Right ventricle myocardium superior (tissue), 1 donor: ENCODE measurements at regions of chr11 and their contacts with region 1.

Region 1: DNA sequence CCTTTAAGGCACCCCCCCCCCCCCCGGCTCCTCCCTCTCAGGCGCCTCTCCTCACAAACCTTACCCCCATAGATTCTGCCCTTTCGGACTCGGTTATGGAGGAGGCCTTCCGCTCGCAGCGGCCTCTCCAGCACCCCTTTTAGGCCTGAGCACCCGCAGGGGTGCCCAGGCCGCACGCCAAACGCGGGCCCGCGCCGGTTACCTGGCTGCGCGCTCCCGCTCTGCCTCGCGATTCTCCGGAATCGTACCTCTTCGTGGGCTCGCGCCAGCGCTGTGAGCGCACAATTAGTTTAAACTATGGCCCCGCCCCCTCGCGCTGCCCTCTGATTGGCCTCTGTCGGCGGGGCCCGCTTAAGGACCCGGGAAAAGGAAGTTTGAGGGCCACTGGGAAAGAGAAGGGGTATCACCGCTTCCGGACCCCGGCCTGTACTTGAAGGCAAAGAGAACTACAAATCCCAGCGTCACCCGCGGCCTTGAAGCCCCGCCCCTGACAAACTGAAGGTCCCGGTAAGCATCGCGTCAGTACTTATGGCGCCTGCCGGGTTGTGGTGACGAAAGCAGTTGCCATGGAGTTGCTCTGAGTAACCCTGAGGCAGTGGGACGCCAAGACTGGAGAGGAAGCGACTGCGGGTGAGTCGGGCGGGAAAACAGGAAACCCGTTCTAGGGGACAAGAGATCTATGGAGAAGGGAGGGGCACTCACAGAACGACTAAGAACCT is at the starts of genes LRRC51 and NUMA1:
- DNase-seq: peak; percentile 100
- ATAC-seq: peak; percentile 98
- total RNA-seq, gene LRRC51: 6.4 TPM
- total RNA-seq, gene NUMA1: 75.0 TPM

Region 2: GRCh38 chr11:72038491-72038890 is 41.9 kb before region 1 on chr11:
- intact Hi-C with region 1: loop called (anchors 5 kb)
- DNase-seq: peak; percentile 70
- ATAC-seq: peak; percentile 59

Region 3: GRCh38 chr11:72321381-72321996 is 241.1 kb after region 1 on chr11:
- intact Hi-C with region 1: no loop called
- DNase-seq: no peak
- ATAC-seq: no peak